PC-9 (cell line): ENCODE measurements at regions of chrX and their contacts with region 1.

Region 1: DNA sequence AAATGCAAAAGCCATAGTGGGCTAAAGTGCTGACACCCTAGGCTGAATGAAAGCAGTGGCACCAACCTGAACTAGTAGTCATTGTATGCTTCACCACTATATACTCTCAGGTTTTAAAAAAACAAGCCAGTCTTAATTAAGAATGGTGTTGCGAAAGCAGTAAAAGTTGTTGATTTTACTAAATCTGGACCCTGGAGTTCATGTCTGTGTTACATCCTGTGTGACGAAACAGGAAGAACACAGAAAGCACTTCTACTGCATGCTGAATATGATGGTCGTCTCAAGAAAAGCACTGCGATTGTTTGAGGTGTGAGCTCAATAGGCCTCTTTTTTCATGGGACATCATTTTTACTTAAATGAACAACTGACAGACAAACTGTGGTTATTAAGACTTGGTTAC is 24.2 kb upstream of the GDPD2 start:
- DNase-seq: no peak
- H3K4me3 ChIP-seq: no peak overlapping the region
- H3K27ac ChIP-seq: no peak overlapping the region
- H3K4me1 ChIP-seq: no peaks in the 10 kb centered on the region
- H3K27me3 ChIP-seq: no peaks in the 10 kb centered on the region
- CTCF ChIP-seq: no peak

Region 2: GRCh38 chrX:70289793-70290776 is 108.8 kb before region 1 on chrX and contains the starts of genes KIF4A and PDZD11:
- CTCF ChIA-PET with region 1: no interaction called
- POLR2A ChIA-PET with region 1: no interaction called
- intact Hi-C with region 1: loop called (anchors 10 kb)
- DNase-seq: peak; percentile 71 to 88
- H3K4me3 ChIP-seq: peak within 1 kb of the TSS; percentile 91
- H3K27ac ChIP-seq: no peak within 1 kb of the TSS
- H3K4me1 ChIP-seq: peaks cover 11% of the 10 kb centered on the region
- H3K27me3 ChIP-seq: no peaks in the 10 kb centered on the region
- CTCF ChIP-seq: no peak
- total RNA-seq, gene KIF4A: 36.7 and 52.9 TPM in 2 replicates
- total RNA-seq, gene PDZD11: 42.0 and 51.2 TPM in 2 replicates

Region 3: DNA sequence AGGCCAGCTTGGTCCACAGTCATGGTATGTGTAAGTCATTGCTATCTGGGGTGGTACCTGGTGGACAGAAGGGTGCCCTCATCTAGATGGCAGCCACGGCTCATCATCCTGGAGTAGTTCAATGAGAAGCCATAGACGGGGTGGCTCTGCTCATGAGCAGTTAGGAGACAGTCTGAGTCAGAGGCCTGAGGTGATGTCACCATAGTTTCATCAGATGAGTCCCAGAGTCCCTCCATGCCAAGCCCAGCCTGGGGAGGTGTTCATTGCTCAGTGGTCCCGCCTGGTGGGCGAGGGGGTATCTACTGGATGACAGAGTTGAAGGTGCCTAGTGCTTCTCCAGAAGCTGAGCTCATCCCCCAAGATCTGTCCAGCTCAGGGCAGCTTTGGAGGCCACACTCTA is 95.5 kb after region 1 on chrX:
- CTCF ChIA-PET with region 1: no interaction called
- POLR2A ChIA-PET with region 1: no interaction called
- intact Hi-C with region 1: no loop called
- DNase-seq: no peak
- H3K4me3 ChIP-seq: no peak overlapping the region
- H3K27ac ChIP-seq: no peak overlapping the region
- H3K4me1 ChIP-seq: no peaks in the 10 kb centered on the region
- H3K27me3 ChIP-seq: no peaks in the 10 kb centered on the region
- CTCF ChIP-seq: no peak